Activated naive CD4-positive, alpha-beta T cell treated with anti-CD3 and anti-CD28 coated beads for 36 hours (primary cell): ENCODE measurements at regions of chr5 and their contacts with region 1.

Region 1: GRCh38 chr5:113513384-113514288 is at the start of gene YTHDC2:
- DNase-seq: peak; percentile 90
- H3K4me3 Mint-ChIP-seq: peak within 1 kb of the TSS; percentile 91
- H3K27ac Mint-ChIP-seq: peak within 1 kb of the TSS; percentile 88
- H3K4me1 Mint-ChIP-seq: peaks cover 27% of the 10 kb centered on the region
- H3K27me3 Mint-ChIP-seq: peaks cover 5% of the 10 kb centered on the region
- total RNA-seq, gene YTHDC2: 24.4 to 28.0 TPM

Region 2: DNA sequence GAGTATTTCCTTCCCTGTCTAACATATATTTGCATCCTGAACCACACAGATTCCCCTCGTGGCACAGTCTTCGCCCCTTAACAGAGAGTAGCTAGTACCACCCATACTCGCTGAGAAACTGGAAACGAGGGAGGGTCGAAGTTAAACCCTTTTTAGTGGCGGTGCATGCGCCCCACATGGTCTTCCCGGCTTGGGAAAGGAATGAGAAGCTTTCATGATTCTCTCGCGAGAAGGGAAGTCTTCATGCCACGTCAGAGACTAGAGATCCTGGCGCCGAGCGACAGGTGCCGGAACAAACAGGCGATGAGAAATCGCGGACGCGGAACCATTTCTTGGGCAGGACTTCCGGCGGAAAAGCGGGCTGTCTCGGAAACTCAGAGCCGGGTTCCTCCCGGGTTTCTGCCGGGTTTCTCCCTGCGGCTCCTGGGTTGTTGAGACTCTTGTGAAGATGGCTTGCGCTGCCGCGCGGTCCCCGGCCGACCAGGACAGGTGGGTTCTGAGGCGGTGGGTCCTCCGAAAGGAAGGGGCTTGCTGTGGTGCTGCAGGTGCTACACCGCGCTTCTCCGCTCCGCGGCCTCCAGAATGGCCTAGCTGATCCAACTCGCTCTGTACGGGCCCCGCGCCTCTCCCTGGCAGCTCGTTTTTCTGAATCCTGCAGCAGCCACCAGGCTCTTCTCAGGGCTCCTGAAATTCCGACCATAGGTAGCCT is 652.6 kb before region 1 on chr5 and contains the start of gene SRP19:
- CTCF ChIA-PET with region 1: no interaction called
- intact Hi-C with region 1: loop called (anchors 10 kb)
- DNase-seq: peak; percentile 96
- H3K4me3 Mint-ChIP-seq: peak within 1 kb of the TSS; percentile 96
- H3K27ac Mint-ChIP-seq: peak within 1 kb of the TSS; percentile 95
- H3K4me1 Mint-ChIP-seq: peaks cover 30% of the 10 kb centered on the region
- H3K27me3 Mint-ChIP-seq: peaks cover 9% of the 10 kb centered on the region
- total RNA-seq, gene SRP19: 43.7 to 49.6 TPM

Region 3: DNA sequence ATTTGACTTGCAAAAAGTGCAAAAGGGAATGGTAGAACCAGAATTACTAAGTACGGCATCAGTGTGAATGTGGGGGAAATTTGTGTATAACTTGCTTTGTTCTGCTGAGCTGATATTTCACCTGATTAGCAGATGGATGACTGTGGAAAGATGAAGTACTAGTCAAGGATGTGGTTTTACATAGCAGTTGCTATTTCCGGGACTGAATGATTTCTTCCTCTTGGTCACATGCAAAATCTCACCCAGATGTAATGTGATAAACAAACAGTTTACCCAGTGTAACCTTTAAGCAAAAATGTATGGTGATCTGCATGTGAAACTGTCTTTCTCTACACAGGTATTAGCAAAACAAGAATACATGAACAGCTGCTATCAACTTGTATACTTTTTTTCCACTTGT is 491.0 kb before region 1 on chr5:
- CTCF ChIA-PET with region 1: no interaction called
- intact Hi-C with region 1: loop called (anchors 5 kb)
- DNase-seq: no peak
- H3K4me3 Mint-ChIP-seq: no peak overlapping the region
- H3K27ac Mint-ChIP-seq: peak overlapping the region; percentile 60
- H3K4me1 Mint-ChIP-seq: peaks cover 49% of the 10 kb centered on the region
- H3K27me3 Mint-ChIP-seq: no peaks in the 10 kb centered on the region

Region 4: GRCh38 chr5:113294311-113295110 is 219.1 kb before region 1 on chr5:
- CTCF ChIA-PET with region 1: interaction called, 5 read pairs
- intact Hi-C with region 1: loop called (anchors 5 kb)
- DNase-seq: peak; percentile 79
- H3K4me3 Mint-ChIP-seq: peak overlapping the region; percentile 81
- H3K27ac Mint-ChIP-seq: no peak overlapping the region
- H3K4me1 Mint-ChIP-seq: peaks cover 14% of the 10 kb centered on the region
- H3K27me3 Mint-ChIP-seq: peaks cover 42% of the 10 kb centered on the region

Region 5: DNA sequence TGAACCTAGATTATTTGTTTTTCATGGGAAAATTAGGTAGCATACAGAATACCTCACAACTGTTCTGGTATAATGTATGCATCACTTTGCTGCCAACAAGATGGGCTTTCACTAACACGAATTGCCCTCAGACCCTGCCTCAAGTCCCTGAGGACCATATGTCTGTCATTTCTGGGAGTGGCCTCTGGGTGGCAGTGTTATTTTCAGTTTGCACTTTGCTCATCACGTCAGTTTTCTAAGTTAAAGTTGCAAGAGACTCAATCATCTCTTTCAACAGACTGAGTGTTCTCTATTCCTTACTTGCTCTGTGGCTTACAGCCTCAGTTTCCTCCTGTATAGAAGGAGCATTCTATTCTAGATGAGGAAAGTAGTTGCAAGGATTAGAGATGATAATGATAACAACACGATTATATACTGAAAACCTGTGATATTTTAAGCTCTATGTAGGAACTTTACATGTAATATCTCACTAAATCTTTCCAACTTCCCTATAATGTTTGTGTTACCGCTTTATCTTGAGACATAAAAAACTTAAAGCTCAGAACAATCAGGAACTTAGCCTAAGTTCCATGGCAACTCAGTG is 134.6 kb before region 1 on chr5:
- CTCF ChIA-PET with region 1: interaction called, 15 read pairs
- intact Hi-C with region 1: loop called (anchors 1 kb)
- DNase-seq: peak; percentile 81
- H3K4me3 Mint-ChIP-seq: no peak overlapping the region
- H3K27ac Mint-ChIP-seq: no peak overlapping the region
- H3K4me1 Mint-ChIP-seq: peaks cover 19% of the 10 kb centered on the region
- H3K27me3 Mint-ChIP-seq: peaks cover 8% of the 10 kb centered on the region

Region 6: GRCh38 chr5:113606298-113607134 is 92.9 kb after region 1 on chr5:
- CTCF ChIA-PET with region 1: no interaction called
- intact Hi-C with region 1: loop called (anchors 2 kb)
- DNase-seq: peak; percentile 49
- H3K4me3 Mint-ChIP-seq: no peak overlapping the region
- H3K27ac Mint-ChIP-seq: no peak overlapping the region
- H3K4me1 Mint-ChIP-seq: peaks cover 3% of the 10 kb centered on the region
- H3K27me3 Mint-ChIP-seq: peaks cover 3% of the 10 kb centered on the region